Sigmoid colon (tissue), 7 donors: ENCODE measurements at regions of chr3 and their contacts with region 1.

Region 1: DNA sequence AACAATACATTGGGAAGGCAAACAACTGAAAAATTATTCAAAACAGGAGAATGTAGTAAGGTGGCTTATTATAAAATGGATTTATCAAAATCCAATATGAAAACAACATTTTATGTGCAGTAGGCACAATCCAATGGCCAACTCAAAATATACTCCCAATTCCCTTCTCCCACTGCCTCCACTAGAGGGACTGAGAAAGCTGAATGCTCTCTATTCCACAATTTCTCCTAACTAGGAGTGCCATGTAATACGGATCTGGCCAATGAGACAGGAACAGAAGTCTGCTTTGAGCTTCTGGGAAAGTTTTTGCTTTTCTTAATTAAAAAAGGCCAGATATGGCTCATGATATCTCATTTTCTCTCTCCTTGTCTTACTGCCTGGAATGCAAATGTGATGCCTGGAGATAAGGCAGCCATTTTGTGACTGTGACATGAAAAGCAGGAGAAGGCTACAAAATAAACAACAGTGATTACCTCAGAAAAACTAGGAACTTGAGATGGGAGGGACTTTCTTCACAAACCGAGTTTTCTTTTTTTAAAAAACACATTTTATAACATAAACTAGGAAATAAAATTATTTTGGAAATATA is 18.8 kb upstream of the VGLL4 start:
- DNase-seq: no peak
- H3K4me3 ChIP-seq: no peak overlapping the region
- H3K27ac ChIP-seq: no peak overlapping the region
- H3K4me1 ChIP-seq: peaks cover 0 to 18% (median 7%) of the 10 kb centered on the region in 4 donors
- H3K27me3 ChIP-seq: no peaks in the 10 kb centered on the region
- CTCF ChIP-seq: peak in 1 of 4 experiments; percentile 26
- EP300 ChIP-seq: no peak
- POLR2A ChIP-seq: no peak

Region 2: DNA sequence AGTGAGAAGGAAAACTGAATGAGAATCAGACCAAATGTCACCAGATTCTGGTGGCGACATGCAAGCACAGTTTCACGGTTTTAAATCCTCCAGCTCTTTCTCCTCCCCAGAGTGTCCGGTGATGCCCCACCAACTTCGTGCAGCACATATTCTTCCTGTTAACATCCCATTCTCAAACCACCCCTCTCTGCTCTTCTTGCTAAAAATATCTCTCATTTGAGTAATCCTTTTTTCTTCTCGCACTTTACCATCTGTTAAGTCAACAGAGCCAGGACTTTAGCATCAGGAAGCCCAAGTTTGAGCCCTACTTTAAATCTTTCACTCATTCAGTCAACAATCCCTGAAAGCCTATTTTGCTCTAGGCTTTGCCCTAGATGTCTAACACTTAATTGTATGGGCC is 49.4 kb after region 1 on chr3:
- intact Hi-C with region 1: loop called (anchors 5 kb)
- DNase-seq: no peak
- H3K4me3 ChIP-seq: no peak overlapping the region
- H3K27ac ChIP-seq: peak overlapping the region in 2 of 4 donors; percentile 18 to 45
- H3K4me1 ChIP-seq: peaks cover 0 to 18% (median 13%) of the 10 kb centered on the region in 4 donors
- H3K27me3 ChIP-seq: no peaks in the 10 kb centered on the region
- CTCF ChIP-seq: no peak
- EP300 ChIP-seq: no peak
- POLR2A ChIP-seq: no peak